Activated CD4-positive, alpha-beta T cell treated with anti-CD3 and anti-CD28 coated beads for 36 hours (primary cell): ENCODE measurements at regions of chr17 and their contacts with region 1.

Region 1: DNA sequence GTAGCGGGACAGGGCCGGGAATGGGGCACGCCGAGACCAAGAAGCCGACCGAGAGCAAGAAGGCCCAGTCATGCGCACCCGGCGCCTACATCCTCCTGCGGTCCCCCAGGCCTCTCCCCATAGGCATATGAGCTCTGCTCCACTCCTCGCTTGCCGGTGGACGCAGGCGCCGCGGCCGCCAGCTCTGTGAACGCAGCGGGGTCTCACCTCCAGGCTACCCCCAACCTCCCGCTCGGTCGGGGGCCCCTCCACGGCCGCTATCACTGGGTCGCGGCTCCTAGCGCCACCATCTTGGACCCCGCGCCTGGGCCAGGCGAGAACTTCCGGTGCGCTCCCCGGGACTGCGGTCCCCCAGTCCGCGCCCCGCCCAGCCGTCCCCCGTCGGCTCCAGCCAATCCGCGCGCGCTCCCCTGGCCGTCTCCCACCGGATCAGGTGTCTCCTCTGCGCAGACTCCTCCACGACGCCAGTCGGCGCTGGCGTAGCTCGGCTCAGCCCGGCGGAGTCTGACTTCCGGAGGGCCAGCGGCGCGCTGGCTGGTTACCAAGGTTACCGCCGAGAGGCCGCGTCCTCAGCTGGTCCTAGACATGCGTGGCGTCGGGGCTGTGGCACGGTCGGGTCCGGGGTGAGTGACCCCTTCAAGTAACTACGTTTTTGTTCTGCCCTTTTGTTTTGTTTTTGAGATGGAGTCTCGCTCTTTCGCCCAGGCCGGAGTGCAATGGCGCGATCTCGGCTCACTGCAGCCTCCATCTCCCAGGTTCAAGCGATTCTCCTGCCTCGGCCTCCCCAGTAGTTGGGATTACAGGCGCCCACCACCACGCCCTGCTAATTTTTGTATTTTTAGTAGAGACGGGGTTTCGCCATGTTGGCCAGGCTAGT is at the start of gene ZNF594:
- DNase-seq: peak; percentile 99
- ATAC-seq: peak; percentile 100
- H3K4me3 Mint-ChIP-seq: peak within 1 kb of the TSS; percentile 94
- H3K27ac Mint-ChIP-seq: peak within 1 kb of the TSS; percentile 88
- H3K4me1 Mint-ChIP-seq: peaks cover 27% of the 10 kb centered on the region
- H3K27me3 Mint-ChIP-seq: no peaks in the 10 kb centered on the region
- total RNA-seq, gene ZNF594: 8.0 to 8.4 TPM

Region 2: GRCh38 chr17:5078106-5079028 is 113.4 kb before region 1 on chr17 and contains the start of gene ZFP3:
- CTCF ChIA-PET with region 1: no interaction called
- POLR2A ChIA-PET with region 1: no interaction called
- intact Hi-C with region 1: loop called in 1 of 2 experiments (anchors 1 kb)
- DNase-seq: peak; percentile 89
- ATAC-seq: peak; percentile 90
- H3K4me3 Mint-ChIP-seq: peak within 1 kb of the TSS; percentile 73
- H3K27ac Mint-ChIP-seq: peak within 1 kb of the TSS; percentile 95
- H3K4me1 Mint-ChIP-seq: peaks cover 30% of the 10 kb centered on the region
- H3K27me3 Mint-ChIP-seq: no peaks in the 10 kb centered on the region
- total RNA-seq, gene ZFP3: 2.2 to 2.8 TPM

Region 3: DNA sequence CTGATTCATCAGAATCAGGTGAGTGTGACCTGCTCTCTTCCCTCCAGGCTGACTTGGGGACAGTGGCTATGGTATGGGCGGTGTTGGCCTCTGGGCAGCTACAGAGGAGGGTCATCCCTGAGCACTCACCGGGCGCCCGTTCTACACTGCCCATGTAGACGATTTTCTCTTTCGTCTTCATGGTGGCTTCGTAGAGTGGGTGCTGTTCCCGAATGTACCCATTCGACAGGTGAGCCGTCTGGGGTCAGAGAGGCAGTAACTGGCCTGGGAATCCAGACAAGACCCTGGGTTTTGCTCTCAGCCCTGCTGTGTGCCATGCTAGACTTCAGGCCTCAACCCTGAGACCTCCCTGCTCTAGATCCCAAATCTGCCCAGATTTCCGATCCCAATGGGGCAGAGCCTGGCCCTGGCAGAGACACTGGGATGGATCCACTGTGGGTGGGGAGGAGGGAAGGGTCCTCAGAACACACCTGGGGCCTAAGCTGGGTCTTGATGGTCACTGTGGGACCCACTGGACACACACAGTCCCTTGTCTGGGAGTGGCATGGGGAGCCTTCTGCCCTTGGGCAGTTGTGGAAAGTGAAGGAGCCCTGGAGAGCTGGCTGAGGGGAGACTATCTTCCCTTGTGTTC is 62.8 kb before region 1 on chr17:
- CTCF ChIA-PET with region 1: no interaction called
- POLR2A ChIA-PET with region 1: no interaction called
- intact Hi-C with region 1: no loop called
- DNase-seq: no peak
- ATAC-seq: no peak
- H3K4me3 Mint-ChIP-seq: no peak overlapping the region
- H3K27ac Mint-ChIP-seq: no peak overlapping the region
- H3K4me1 Mint-ChIP-seq: no peaks in the 10 kb centered on the region
- H3K27me3 Mint-ChIP-seq: peaks cover 17% of the 10 kb centered on the region

Region 4: GRCh38 chr17:5304636-5305035 is 112.9 kb after region 1 on chr17:
- CTCF ChIA-PET with region 1: no interaction called
- POLR2A ChIA-PET with region 1: interaction called, 3 read pairs
- intact Hi-C with region 1: loop called in 1 of 2 experiments (anchors 10 kb)
- DNase-seq: no peak
- ATAC-seq: no peak
- H3K4me3 Mint-ChIP-seq: no peak overlapping the region
- H3K27ac Mint-ChIP-seq: no peak overlapping the region
- H3K4me1 Mint-ChIP-seq: peaks cover 41% of the 10 kb centered on the region
- H3K27me3 Mint-ChIP-seq: no peaks in the 10 kb centered on the region

Region 5: GRCh38 chr17:5468075-5468473 is 276.3 kb after region 1 on chr17:
- CTCF ChIA-PET with region 1: interaction called, 3 read pairs
- POLR2A ChIA-PET with region 1: no interaction called
- intact Hi-C with region 1: loop called in 1 of 2 experiments (anchors 2 kb)
- DNase-seq: peak; percentile 35
- ATAC-seq: peak; percentile 14
- H3K4me3 Mint-ChIP-seq: peak overlapping the region; percentile 90
- H3K27ac Mint-ChIP-seq: peak overlapping the region; percentile 75
- H3K4me1 Mint-ChIP-seq: peaks cover 38% of the 10 kb centered on the region
- H3K27me3 Mint-ChIP-seq: no peaks in the 10 kb centered on the region